Dorsolateral prefrontal cortex (tissue), 120 donors: ENCODE measurements at regions of chr10 and their contacts with region 1.

Region 1: DNA sequence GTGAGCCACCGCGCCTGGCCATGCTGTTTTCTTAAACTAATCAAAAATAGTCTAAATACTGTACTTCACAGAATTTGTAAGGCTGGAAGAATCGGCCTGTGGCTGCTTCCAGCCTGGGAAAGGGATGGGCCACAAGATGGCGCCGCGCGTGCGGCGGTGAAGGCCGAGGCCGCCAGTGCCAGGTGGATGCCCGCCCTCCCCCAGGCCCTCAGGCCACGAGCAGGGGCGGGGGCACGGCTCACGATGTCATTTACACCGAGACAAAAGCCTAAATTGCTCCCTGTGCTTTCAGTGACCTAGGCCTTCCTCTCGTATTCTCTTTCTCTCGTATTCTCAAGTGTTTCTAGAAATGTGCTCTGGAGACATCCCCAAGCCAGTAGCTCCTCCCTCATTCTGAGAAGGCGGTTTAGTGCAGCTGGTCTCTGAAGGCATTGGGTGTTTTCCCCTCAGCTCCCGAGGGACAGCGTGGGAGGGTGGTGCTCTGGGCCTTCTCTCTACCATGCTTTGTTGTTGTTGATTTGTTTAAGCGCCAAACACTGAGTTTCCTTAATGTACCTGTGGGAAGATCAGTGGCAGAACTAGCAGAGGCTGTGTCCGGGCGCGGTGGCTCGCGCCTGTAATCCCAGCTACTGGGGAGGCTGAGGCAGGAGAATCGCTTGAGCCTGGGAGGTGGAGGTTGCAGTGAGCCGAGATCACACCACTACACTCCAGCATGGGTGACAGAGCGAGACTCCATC is 68.4 kb downstream of the CDC123 start:
- DNase-seq: peak; percentile 61 to 86 (median 72)
- H3K4me3 ChIP-seq: peak overlapping the region in 58 of 59 donors; percentile 22 to 73 (median 54)
- H3K27ac ChIP-seq: peak overlapping the region in 40 of 59 donors; percentile 2 to 89 (median 59)
- H3K27me3 ChIP-seq: no peaks in the 10 kb centered on the region
- CTCF ChIP-seq: peak; percentile 51 to 95 (median 87)

Region 2: DNA sequence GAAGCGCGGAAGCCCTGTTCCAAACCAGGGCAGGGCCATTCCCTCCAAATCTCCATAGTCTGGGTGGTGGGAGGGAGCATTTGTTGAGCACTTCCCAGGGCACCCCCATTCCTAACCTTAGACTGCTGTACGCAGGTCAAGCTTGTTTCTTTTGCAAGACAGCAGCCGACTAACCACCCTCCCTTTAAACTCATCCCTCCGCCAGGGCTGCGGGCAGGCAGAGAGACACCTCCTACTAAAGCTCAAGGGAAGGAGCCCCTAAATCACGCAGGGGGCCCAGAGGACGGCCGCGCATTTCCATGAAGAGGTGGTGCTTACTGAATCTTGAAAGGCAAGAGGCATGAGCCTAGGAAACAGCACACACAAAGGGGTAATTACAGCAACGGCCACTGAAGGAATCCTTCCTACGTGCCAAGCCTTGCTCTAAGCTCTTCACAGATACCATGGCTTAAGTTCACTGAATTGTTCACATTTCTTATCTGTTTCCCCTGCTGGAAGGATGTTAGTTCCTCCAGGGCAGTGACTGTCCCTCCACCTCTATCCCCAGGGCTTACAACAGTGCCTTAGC is 351.2 kb before region 1 on chr10:
- intact Hi-C with region 1: no loop called
- DNase-seq: no peak
- H3K4me3 ChIP-seq: no peak overlapping the region
- H3K27ac ChIP-seq: no peak overlapping the region
- H3K27me3 ChIP-seq: peaks cover 0 to 3% (median 0%) of the 10 kb centered on the region in 45 donors
- CTCF ChIP-seq: no peak

Region 3: DNA sequence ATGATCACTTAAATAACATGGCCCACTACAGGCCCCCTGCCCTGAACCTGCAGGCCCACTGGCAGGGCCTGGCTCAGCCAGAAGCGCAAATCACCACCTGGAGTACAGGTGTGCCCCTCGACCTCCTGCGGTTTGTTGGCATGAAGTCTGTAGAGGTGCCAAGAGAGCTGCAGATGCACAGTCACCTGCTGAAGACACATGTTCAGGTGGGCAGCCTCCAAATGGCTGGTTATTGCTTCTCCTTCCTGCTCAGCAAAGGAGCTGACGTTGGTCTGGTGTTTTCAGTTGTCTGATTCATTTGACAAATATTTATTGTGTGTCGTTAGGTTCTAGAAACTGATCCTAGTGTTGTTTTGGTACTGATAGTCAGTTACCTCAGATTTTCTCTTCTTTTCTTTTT is 166.6 kb before region 1 on chr10:
- intact Hi-C with region 1: no loop called
- DNase-seq: no peak
- H3K4me3 ChIP-seq: no peak overlapping the region
- H3K27ac ChIP-seq: no peak overlapping the region
- H3K27me3 ChIP-seq: no peaks in the 10 kb centered on the region
- CTCF ChIP-seq: no peak

Region 4: GRCh38 chr10:12655940-12656339 is 391.6 kb after region 1 on chr10:
- intact Hi-C with region 1: loop called in 1 of 2 experiments (anchors 2 kb)
- DNase-seq: no peak
- H3K4me3 ChIP-seq: no peak overlapping the region
- H3K27ac ChIP-seq: no peak overlapping the region
- H3K27me3 ChIP-seq: no peaks in the 10 kb centered on the region
- CTCF ChIP-seq: no peak

Region 5: GRCh38 chr10:12710594-12711349 is 446.4 kb after region 1 on chr10:
- intact Hi-C with region 1: loop called (anchors 2 to 5 kb)
- DNase-seq: peak in 9 of 10 donors; percentile 54 to 84 (median 79)
- H3K4me3 ChIP-seq: no peak overlapping the region
- H3K27ac ChIP-seq: peak overlapping the region in 20 of 59 donors; percentile 7 to 83 (median 42)
- H3K27me3 ChIP-seq: no peaks in the 10 kb centered on the region
- CTCF ChIP-seq: peak; percentile 72 to 95 (median 88)

Region 6: GRCh38 chr10:12902135-12902572 is 637.8 kb after region 1 on chr10:
- intact Hi-C with region 1: loop called in 1 of 2 experiments (anchors 10 kb)
- DNase-seq: peak in 4 of 10 donors; percentile 51 to 75 (median 61)
- H3K4me3 ChIP-seq: no peak overlapping the region
- H3K27ac ChIP-seq: peak overlapping the region in 11 of 59 donors; percentile 2 to 84 (median 52)
- H3K27me3 ChIP-seq: no peaks in the 10 kb centered on the region
- CTCF ChIP-seq: peak; percentile 48 to 84 (median 76)

Region 7: DNA sequence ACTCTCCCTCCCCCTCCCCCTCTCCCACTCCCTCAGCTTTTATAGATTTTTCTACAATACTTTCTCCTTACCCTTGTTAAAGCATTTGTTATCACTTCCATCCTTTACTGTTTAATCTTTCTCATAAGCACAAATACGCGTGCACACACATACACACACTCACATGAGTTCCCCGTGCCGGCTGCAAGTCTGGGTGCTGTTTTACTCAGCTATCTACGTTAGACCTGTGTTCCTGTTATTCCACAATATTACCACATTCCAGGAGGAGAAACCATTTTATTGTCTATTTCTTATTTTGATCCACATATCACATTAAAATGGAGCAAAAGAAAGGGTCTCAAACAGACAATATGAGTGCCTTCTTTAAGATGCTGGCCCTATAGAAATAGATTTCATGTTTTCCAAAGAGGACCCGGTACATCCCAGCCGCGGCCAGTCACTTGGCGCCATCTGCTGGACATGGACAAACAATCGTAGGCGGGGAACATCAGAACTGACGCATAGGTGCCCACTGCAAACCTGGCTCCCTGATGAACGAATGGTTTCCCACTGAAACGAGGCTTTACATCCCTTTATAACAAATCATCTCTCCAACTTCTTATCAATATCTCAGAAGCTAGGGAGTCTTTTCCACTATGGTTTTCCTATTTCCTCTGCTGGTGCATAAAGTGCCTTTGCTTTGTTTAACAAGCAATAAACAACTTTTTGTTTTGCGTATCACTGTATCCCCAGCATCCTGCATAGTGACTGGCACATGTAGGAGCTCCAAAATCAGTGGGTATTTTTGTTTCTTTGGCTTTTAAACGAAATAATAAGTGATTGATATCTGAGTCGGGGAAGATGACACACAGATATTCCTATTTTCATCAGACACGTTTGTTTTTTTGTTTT is 810.4 kb after region 1 on chr10:
- intact Hi-C with region 1: loop called (anchors 5 to 10 kb)
- DNase-seq: peak; percentile 61 to 86 (median 80)
- H3K4me3 ChIP-seq: peak overlapping the region in 32 of 59 donors; percentile 1 to 51 (median 27)
- H3K27ac ChIP-seq: peak overlapping the region in 1 of 59 donors; percentile 47
- H3K27me3 ChIP-seq: no peaks in the 10 kb centered on the region
- CTCF ChIP-seq: peak; percentile 70 to 95 (median 87)